ENCODE measurements at regions of chrX and their contacts with region 1.

Region 1: GRCh38 chrX:48648336-48648751 is 35.3 kb upstream of the WAS start:
- DNase-seq: no peak
- H3K4me3 ChIP-seq: no peak overlapping the region
- H3K27ac ChIP-seq: peak overlapping the region in 3 of 4 donors; percentile 20 to 68 (median 31)
- H3K4me1 ChIP-seq: peaks cover 0 to 8% (median 4%) of the 10 kb centered on the region in 4 donors
- H3K27me3 ChIP-seq: no peaks in the 10 kb centered on the region
- CTCF ChIP-seq: peak; percentile 33 to 47 (median 42)
- EP300 ChIP-seq: no peak
- POLR2A ChIP-seq: no peak

Region 2: DNA sequence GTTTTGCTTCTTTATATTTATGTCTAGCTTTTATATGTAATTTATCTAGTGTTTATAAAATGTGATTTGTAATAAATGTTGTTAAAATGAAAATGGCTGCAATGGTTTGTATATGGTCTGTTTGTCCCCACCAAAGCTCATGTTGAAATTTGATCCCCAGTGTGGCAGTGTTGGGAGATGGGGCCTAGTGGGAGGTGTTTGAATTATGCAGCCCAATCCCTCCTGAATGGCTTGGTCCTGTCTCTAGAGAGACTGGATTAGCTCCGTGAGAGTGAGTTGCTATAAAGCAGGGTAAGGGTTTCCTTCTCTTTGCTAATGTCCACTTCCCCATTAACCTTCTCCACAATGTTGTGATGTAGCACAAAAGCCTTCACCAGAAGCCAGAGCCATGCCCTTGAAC is 1766.1 kb before region 1 on chrX:
- intact Hi-C with region 1: no loop called
- DNase-seq: no peak
- H3K4me3 ChIP-seq: no peak overlapping the region
- H3K27ac ChIP-seq: no peak overlapping the region
- H3K4me1 ChIP-seq: no peaks in the 10 kb centered on the region
- H3K27me3 ChIP-seq: no peaks in the 10 kb centered on the region
- CTCF ChIP-seq: no peak
- EP300 ChIP-seq: no peak
- POLR2A ChIP-seq: no peak

Region 3: GRCh38 chrX:48458711-48459110 is 189.6 kb before region 1 on chrX:
- intact Hi-C with region 1: no loop called
- DNase-seq: no peak
- H3K4me3 ChIP-seq: no peak overlapping the region
- H3K27ac ChIP-seq: no peak overlapping the region
- H3K4me1 ChIP-seq: no peaks in the 10 kb centered on the region
- H3K27me3 ChIP-seq: no peaks in the 10 kb centered on the region
- CTCF ChIP-seq: no peak
- EP300 ChIP-seq: no peak
- POLR2A ChIP-seq: no peak

Region 4: GRCh38 chrX:48703642-48704481 is 55.5 kb after region 1 on chrX:
- intact Hi-C with region 1: loop called (anchors 10 kb)
- DNase-seq: no peak
- H3K4me3 ChIP-seq: no peak overlapping the region
- H3K27ac ChIP-seq: no peak overlapping the region
- H3K4me1 ChIP-seq: no peaks in the 10 kb centered on the region
- H3K27me3 ChIP-seq: no peaks in the 10 kb centered on the region
- CTCF ChIP-seq: no peak
- EP300 ChIP-seq: no peak
- POLR2A ChIP-seq: no peak

Region 5: GRCh38 chrX:48794911-48795501 is 146.7 kb after region 1 on chrX:
- intact Hi-C with region 1: loop called (anchors 10 kb)
- DNase-seq: no peak
- H3K4me3 ChIP-seq: no peak overlapping the region
- H3K27ac ChIP-seq: no peak overlapping the region
- H3K4me1 ChIP-seq: no peaks in the 10 kb centered on the region
- H3K27me3 ChIP-seq: peaks cover 0 to 7% (median 0%) of the 10 kb centered on the region in 4 donors
- CTCF ChIP-seq: no peak
- EP300 ChIP-seq: no peak
- POLR2A ChIP-seq: no peak